CD8-positive, alpha-beta T cell (primary cell): ENCODE measurements at regions of chr18 and their contacts with region 1.

Region 1: GRCh38 chr18:63753676-63754075 is 21.5 kb upstream of the SERPINB7 start:
- DNase-seq: no peak
- ATAC-seq: no peak
- H3K4me3 ChIP-seq: no peak overlapping the region
- H3K4me3 Mint-ChIP-seq: no peak overlapping the region
- H3K27ac ChIP-seq: no peak overlapping the region
- H3K27ac Mint-ChIP-seq: no peak overlapping the region
- H3K4me1 ChIP-seq: no peaks in the 10 kb centered on the region
- H3K4me1 Mint-ChIP-seq: no peaks in the 10 kb centered on the region
- H3K27me3 ChIP-seq: no peaks in the 10 kb centered on the region
- H3K27me3 Mint-ChIP-seq: peaks cover 4% of the 10 kb centered on the region
- CTCF ChIP-seq: no peak

Region 2: DNA sequence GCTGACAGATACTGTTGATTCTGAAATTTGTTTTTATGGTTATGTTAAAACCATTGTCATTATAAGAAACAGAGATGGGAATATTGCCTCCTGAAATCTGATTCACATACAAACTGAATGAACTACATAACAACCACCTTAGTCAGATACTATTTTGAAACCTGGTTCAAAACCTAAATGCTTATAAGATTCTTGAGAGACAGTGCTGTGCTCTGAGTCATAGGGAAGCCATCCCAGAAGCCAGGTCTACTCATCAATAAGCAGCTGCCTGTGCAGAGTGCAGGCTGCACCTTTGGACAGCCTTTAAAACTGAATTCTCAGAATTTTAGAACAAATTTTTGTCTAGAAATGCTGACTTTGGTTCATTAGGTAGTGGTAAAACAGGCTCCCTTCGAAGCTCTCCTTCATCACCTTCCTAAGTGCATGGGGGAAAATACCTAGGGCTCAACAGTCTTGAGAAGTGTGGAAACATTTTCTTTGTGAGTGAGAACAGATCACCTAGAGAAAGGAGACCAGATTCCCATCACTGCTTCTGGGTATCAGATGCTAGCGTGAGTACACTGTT is 21.6 kb after region 1 on chr18 and contains the start of gene SERPINB7:
- CTCF ChIA-PET with region 1: no interaction called
- POLR2A ChIA-PET with region 1: interaction called, 3 read pairs
- intact Hi-C with region 1: loop called in 1 of 2 experiments (anchors 1 kb)
- DNase-seq: no peak
- ATAC-seq: no peak
- H3K4me3 ChIP-seq: no peak within 1 kb of the TSS
- H3K4me3 Mint-ChIP-seq: no peak within 1 kb of the TSS
- H3K27ac ChIP-seq: no peak within 1 kb of the TSS
- H3K27ac Mint-ChIP-seq: no peak within 1 kb of the TSS
- H3K4me1 ChIP-seq: no peaks in the 10 kb centered on the region
- H3K4me1 Mint-ChIP-seq: no peaks in the 10 kb centered on the region
- H3K27me3 ChIP-seq: no peaks in the 10 kb centered on the region
- H3K27me3 Mint-ChIP-seq: peaks cover 6% of the 10 kb centered on the region
- CTCF ChIP-seq: no peak
- total RNA-seq, gene SERPINB7: not detected